ENCODE measurements at regions of chr20 and their contacts with region 1.

Region 1: GRCh38 chr20:51569827-51570738 is 27.6 kb upstream of the NFATC2 start:
- DNase-seq: peak in 4 of 5 donors; percentile 33 to 87 (median 56)
- ATAC-seq: peak; percentile 86 to 94 (median 89)
- H3K4me3 ChIP-seq: peak overlapping the region in 9 of 12 donors; percentile 20 to 44 (median 34)
- H3K27ac ChIP-seq: peak overlapping the region; percentile 58 to 94 (median 81)
- H3K4me1 ChIP-seq: peaks cover 0 to 34% (median 11%) of the 10 kb centered on the region in 12 donors
- H3K27me3 ChIP-seq: no peaks in the 10 kb centered on the region
- CTCF ChIP-seq: no peak
- POLR2A ChIP-seq: no peak

Region 2: DNA sequence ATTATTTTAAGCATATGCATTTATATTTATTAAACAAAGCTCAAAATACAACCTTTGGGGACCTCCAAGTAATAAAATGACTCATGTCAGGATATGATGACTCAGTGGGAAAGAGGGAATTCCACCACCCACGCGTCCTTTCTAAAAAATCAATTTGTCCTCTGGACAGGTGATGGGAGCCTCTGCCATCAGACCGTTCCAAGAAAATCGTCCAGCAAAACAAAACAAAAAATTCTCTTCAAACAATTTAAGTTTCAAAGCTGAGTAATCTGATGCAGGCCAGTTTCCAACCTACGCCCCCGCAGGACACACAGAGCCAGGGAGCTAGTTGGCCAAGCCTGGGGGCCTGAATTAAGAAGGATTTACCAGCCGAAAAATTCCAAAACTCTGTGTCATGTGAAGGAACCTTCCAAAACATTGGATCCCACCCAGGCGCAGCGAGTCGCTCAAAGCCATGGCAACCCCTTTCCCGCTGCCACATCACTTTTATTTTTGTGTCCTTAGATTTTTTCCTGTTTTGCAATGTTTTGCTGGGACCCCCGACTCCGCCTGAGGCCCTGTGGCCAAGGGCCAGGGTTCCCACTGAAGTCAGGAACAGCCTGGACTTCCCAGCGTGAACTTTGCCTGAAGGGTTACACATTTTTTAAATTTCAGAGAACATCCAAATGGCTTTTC is 122.8 kb before region 1 on chr20:
- intact Hi-C with region 1: loop called in 5 of 10 experiments (anchors 5 to 10 kb)
- DNase-seq: peak; percentile 60 to 74 (median 62)
- ATAC-seq: peak in 3 of 4 donors; percentile 7 to 71 (median 45)
- H3K4me3 ChIP-seq: no peak overlapping the region
- H3K27ac ChIP-seq: peak overlapping the region in 4 of 12 donors; percentile 1 to 59 (median 28)
- H3K4me1 ChIP-seq: peaks cover 5 to 49% (median 36%) of the 10 kb centered on the region in 12 donors
- H3K27me3 ChIP-seq: no peaks in the 10 kb centered on the region
- CTCF ChIP-seq: no peak
- POLR2A ChIP-seq: no peak

Region 3: GRCh38 chr20:51639206-51639832 is 69.2 kb after region 1 on chr20:
- intact Hi-C with region 1: no loop called
- DNase-seq: peak; percentile 44 to 74 (median 52)
- ATAC-seq: peak; percentile 59 to 87 (median 78)
- H3K4me3 ChIP-seq: no peak overlapping the region
- H3K27ac ChIP-seq: no peak overlapping the region
- H3K4me1 ChIP-seq: peaks cover 0 to 8% (median under 1%) of the 10 kb centered on the region in 12 donors
- H3K27me3 ChIP-seq: no peaks in the 10 kb centered on the region
- CTCF ChIP-seq: peak; percentile 73 to 90 (median 84)
- POLR2A ChIP-seq: no peak